ENCODE measurements at regions of chr7 and their contacts with region 1.

Region 1: GRCh38 chr7:25851332-25852210 is 300.4 kb upstream of the NFE2L3 start:
- DNase-seq: peak; percentile 93

Region 2: GRCh38 chr7:25259587-25260243 is 591.9 kb before region 1 on chr7:
- intact Hi-C with region 1: loop called (anchors 2 to 5 kb)
- DNase-seq: no peak

Region 3: DNA sequence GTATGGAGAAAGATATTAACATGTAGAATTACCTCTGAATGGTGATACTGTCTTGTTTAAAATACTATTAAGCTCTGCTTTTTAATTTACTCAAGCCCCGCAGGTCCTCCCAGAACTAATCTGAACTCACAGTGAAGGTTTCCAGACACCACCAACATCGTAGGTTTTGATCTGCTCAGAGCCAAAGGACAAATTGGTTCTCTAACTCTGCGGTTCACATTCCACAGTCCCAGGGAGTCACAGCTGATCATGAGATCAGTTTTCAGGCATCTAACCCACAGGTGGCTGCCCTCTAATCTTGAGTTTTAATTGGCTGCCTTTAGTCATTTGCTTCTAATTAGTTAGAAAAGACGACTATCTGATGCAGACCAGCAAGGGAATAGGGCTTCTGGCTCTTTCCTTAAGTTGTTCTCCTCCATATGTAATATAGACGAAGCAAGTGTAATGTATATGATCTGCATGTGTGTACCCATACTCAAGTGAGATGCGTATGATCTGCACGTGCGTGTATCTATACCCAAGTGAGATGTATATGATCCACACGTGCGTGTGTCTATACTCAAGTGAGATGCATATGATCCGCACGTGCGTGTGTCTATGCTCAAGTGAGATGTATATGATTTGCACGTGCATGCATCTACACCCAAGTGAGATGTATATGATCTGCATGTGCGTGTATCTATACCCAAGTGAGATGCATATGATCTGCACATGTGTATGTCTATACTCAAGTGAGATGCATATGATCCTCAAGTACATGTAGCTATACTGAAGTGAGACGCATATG is 291.8 kb before region 1 on chr7:
- intact Hi-C with region 1: loop called in 1 of 2 experiments (anchors 5 kb)
- DNase-seq: no peak

Region 4: GRCh38 chr7:25669961-25670841 is 181.4 kb before region 1 on chr7:
- intact Hi-C with region 1: loop called in 1 of 2 experiments (anchors 10 kb)
- DNase-seq: peak; percentile 81

Region 5: GRCh38 chr7:25820432-25821040 is 31.0 kb before region 1 on chr7:
- intact Hi-C with region 1: no loop called
- DNase-seq: no peak

Region 6: GRCh38 chr7:27160546-27161213 is 1309.1 kb after region 1 on chr7:
- intact Hi-C with region 1: loop called in 1 of 2 experiments (anchors 10 kb)
- DNase-seq: peak; percentile 97

Measured in posterior vena cava (tissue), 2 donors.